ENCODE measurements at regions of chr1 and their contacts with region 1.

Region 1: GRCh38 chr1:25675729-25676476 is 59.3 kb downstream of the MAN1C1 start:
- DNase-seq: peak; percentile 95
- H3K4me3 Mint-ChIP-seq: peak overlapping the region; percentile 75
- H3K27ac Mint-ChIP-seq: peak overlapping the region; percentile 88
- H3K4me1 Mint-ChIP-seq: peaks cover 59% of the 10 kb centered on the region
- H3K27me3 Mint-ChIP-seq: peaks cover 81% of the 10 kb centered on the region

Region 2: GRCh38 chr1:25549273-25550154 is 126.4 kb before region 1 on chr1:
- intact Hi-C with region 1: loop called (anchors 1 kb)
- DNase-seq: peak; percentile 90
- H3K4me3 Mint-ChIP-seq: peak overlapping the region; percentile 71
- H3K27ac Mint-ChIP-seq: peak overlapping the region; percentile 87
- H3K4me1 Mint-ChIP-seq: peaks cover 54% of the 10 kb centered on the region
- H3K27me3 Mint-ChIP-seq: peaks cover 4% of the 10 kb centered on the region

Region 3: DNA sequence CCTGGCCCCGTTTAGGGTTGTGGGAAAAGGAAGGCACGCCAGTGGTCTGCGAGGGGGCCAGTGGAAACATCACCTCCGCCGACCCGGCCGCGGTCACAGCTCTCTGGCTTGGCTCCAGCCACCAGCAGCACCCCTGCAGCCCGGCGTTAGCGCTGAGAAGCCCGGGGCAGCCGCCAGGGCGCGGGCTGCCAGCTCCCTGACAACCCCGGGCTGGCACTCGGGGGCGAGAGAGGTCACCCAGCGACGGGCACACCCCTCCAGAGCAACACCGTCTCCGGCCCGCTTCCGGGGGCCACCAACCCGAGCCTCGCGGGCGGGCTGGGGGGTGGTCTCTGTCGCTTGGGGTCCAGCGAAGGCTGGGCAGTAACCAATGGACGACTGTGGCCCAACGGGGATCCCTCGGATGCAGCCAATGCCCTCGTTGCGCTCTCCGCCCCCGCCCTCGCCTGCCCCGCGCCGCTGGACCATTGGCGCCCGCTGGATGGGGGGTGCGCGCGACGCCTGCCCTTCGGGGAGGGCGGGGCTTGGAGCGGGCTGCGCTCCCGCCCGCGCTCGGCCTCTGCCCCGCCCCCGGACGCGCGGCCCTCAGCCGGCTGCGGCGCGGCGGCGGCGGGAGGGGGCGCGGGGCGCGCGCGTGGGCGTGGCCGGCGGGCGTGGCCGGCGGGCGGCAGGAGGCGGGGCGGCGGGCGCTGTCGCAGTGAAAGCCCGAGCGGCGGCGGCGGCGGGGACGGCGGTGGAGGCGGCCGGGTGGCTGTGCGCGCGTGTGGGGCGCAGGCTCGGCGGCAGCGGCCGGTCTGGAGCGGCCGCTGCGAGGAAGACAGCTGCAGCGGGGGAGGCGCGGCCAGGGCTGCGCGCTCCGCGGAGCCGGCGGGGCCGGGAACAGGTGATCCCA is 59.6 kb before region 1 on chr1 and contains the start of gene MAN1C1:
- intact Hi-C with region 1: loop called (anchors 1 kb)
- DNase-seq: peak; percentile 95
- H3K4me3 Mint-ChIP-seq: peak within 1 kb of the TSS; percentile 91
- H3K27ac Mint-ChIP-seq: peak within 1 kb of the TSS; percentile 47
- H3K4me1 Mint-ChIP-seq: peaks cover 54% of the 10 kb centered on the region
- H3K27me3 Mint-ChIP-seq: peaks cover 65% of the 10 kb centered on the region
- total RNA-seq, gene MAN1C1: 2.2 and 2.9 TPM in 2 replicates

Region 4: DNA sequence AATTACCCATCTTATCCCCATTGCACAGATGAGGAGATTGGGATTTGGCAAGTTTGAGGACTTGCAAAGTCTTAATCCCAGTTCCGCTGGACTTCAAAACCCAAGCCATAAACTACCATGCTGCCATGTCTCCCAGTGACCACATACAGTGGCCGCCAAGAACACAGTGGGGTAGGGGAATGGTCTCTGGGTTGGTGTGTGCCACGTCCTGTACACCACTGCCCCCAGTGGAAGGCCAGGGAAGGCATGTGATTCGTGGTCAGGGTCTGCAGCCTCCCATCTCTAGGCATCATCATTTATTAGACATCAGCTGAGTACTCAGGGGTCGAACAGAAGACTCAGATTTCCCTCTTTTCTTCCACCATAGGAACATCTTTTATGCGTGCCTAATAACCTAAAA is 16.7 kb after region 1 on chr1:
- intact Hi-C with region 1: loop called (anchors 2 kb)
- DNase-seq: peak; percentile 68
- H3K4me3 Mint-ChIP-seq: no peak overlapping the region
- H3K27ac Mint-ChIP-seq: no peak overlapping the region
- H3K4me1 Mint-ChIP-seq: peaks cover 16% of the 10 kb centered on the region
- H3K27me3 Mint-ChIP-seq: peaks cover 56% of the 10 kb centered on the region

Region 5: DNA sequence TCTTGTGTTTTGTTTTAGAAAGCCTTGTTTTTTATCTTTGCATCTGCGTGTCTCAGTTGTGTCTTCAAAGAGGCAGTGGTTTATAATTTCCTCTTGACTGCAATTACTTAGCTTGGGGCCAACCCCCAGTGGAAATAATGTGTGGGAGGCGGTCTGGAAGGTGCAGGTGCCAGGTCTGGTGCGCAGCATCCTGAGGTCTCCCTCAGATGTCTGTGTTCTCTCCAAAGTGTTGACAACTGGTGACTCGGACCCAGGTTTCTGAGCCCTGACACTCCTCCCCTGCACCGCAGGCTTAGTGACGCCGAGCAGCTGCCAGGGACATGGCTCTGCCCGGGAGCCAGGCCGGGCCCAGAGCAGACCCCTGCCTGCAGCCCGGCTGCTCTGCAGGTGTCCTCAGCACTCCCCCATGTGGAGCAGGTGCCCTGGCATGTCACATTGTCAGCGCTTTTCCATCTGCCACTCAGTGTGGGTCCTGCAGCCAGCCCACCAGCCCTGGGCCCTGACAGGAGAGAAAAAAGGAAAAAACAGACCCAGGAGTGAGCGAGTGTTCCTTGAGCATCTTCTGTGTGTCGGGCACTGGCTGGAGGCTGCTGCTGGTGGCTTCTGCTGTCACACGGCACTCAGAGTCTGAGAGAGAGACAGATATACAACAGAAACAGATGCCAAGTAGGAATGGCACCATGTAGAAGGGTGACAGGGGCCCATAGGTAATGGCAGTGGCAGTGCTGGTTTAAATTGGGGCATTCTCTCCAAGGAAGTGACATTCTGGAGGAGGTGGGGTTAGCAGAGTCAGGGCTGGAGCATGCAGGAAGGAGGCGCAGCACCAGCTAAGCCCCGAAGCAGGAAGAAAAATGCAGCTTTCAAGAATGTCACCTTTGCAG is 99.3 kb after region 1 on chr1:
- intact Hi-C with region 1: loop called (anchors 1 kb)
- DNase-seq: peak; percentile 94
- H3K4me3 Mint-ChIP-seq: peak overlapping the region; percentile 67
- H3K27ac Mint-ChIP-seq: peak overlapping the region; percentile 59
- H3K4me1 Mint-ChIP-seq: peaks cover 26% of the 10 kb centered on the region
- H3K27me3 Mint-ChIP-seq: peaks cover 53% of the 10 kb centered on the region

Region 6: GRCh38 chr1:25837262-25837875 is 161.5 kb after region 1 on chr1:
- intact Hi-C with region 1: no loop called
- DNase-seq: no peak
- H3K4me3 Mint-ChIP-seq: no peak overlapping the region
- H3K27ac Mint-ChIP-seq: no peak overlapping the region
- H3K4me1 Mint-ChIP-seq: no peaks in the 10 kb centered on the region
- H3K27me3 Mint-ChIP-seq: no peaks in the 10 kb centered on the region